ENCODE measurements at regions of chr15 and their contacts with region 1.

Region 1: GRCh38 chr15:64046347-64047153 is at the start of gene DAPK2:
- DNase-seq: peak; percentile 29 to 83 (median 63)
- ATAC-seq: peak; percentile 91
- H3K4me3 ChIP-seq: peak within 1 kb of the TSS; percentile 55
- H3K4me3 Mint-ChIP-seq: peak within 1 kb of the TSS; percentile 74 to 85 (median 82)
- H3K27ac ChIP-seq: no peak within 1 kb of the TSS
- H3K27ac Mint-ChIP-seq: peak within 1 kb of the TSS in 5 of 9 donors; percentile 28 to 88 (median 61)
- H3K4me1 ChIP-seq: peaks cover 0 to 5% of the 10 kb centered on the region in 2 donors
- H3K4me1 Mint-ChIP-seq: peaks cover 5 to 30% (median 10%) of the 10 kb centered on the region in 7 donors
- H3K27me3 ChIP-seq: no peaks in the 10 kb centered on the region
- H3K27me3 Mint-ChIP-seq: peaks cover 4 to 41% (median 13%) of the 10 kb centered on the region in 5 donors
- total RNA-seq, gene DAPK2: 0.46 to 9.3 (median 4.2) TPM in 4 of 5 experiments, not detected in the other

Region 2: DNA sequence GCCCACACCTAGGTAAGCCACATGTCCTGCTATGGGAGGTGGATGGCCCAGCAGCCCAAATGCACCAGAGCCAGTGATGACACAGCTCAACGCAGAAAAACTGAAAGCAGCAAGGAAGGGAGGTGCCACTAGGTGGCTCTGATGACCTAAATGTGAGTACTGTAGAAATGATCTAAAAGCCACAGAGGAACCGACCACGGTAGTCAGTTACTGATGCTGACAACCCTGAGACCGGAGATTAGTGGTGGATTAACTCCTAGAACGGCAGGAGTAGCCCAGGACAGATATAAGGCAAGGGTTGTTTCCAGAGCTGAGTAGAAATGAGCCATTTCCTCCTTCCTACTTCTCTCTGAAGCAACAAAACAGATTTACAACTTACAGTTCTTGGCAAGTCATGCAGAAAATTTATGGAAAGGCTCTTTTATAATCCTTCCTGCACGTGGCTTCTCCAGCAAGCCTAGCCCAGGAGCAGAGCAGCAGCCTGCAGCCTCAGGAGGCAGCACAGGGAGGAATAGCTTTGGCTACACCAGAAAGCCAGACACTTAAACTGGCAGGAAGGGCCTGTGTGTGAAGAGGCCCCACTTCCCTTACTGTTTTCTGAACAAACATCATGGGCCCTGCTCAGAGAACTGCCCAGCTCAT is 436.2 kb before region 1 on chr15:
- CTCF ChIA-PET with region 1: interaction called, 3 read pairs
- POLR2A ChIA-PET with region 1: no interaction called
- intact Hi-C with region 1: loop called in 1 of 2 experiments (anchors 2 kb)
- DNase-seq: peak in 8 of 9 donors; percentile 43 to 71 (median 64)
- ATAC-seq: peak; percentile 94
- H3K4me3 ChIP-seq: no peak overlapping the region
- H3K4me3 Mint-ChIP-seq: peak overlapping the region in 7 of 10 donors; percentile 9 to 68 (median 42)
- H3K27ac ChIP-seq: peak overlapping the region; percentile 69
- H3K27ac Mint-ChIP-seq: peak overlapping the region; percentile 74 to 94 (median 84)
- H3K4me1 ChIP-seq: peaks cover 23 to 25% of the 10 kb centered on the region in 2 donors
- H3K4me1 Mint-ChIP-seq: peaks cover 23 to 51% (median 41%) of the 10 kb centered on the region in 7 donors
- H3K27me3 ChIP-seq: no peaks in the 10 kb centered on the region
- H3K27me3 Mint-ChIP-seq: no peaks in the 10 kb centered on the region

Region 3: DNA sequence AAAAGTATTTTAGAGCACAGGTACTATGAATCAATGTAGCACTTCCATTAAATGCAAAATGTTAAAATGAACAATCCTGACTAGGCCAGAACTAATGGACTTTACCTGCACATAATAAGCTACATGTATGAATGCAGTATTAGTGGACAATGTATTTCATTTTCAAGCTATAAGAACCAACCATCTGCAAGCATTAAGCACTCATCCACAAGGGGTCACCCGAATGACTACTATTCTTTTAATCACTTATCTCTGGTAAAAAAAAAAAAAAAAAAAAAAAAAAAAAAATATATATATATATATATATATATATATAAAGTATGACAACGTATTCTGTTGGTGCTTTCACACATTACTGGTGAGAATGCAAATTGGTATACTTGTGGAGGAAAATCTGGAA is 220.0 kb before region 1 on chr15:
- CTCF ChIA-PET with region 1: no interaction called
- POLR2A ChIA-PET with region 1: no interaction called
- intact Hi-C with region 1: loop called (anchors 1 to 5 kb)
- DNase-seq: peak in 3 of 9 donors; percentile 36 to 44 (median 37)
- ATAC-seq: peak; percentile 26
- H3K4me3 ChIP-seq: no peak overlapping the region
- H3K4me3 Mint-ChIP-seq: peak overlapping the region in 8 of 10 donors; percentile 3 to 53 (median 34)
- H3K27ac ChIP-seq: no peak overlapping the region
- H3K27ac Mint-ChIP-seq: peak overlapping the region in 7 of 9 donors; percentile 36 to 98 (median 58)
- H3K4me1 ChIP-seq: peaks cover 21 to 31% of the 10 kb centered on the region in 2 donors
- H3K4me1 Mint-ChIP-seq: peaks cover 67 to 94% (median 85%) of the 10 kb centered on the region in 7 donors
- H3K27me3 ChIP-seq: no peaks in the 10 kb centered on the region
- H3K27me3 Mint-ChIP-seq: no peaks in the 10 kb centered on the region

Region 4: GRCh38 chr15:63945007-63945788 is 101.4 kb before region 1 on chr15:
- CTCF ChIA-PET with region 1: interaction called, 4 read pairs
- POLR2A ChIA-PET with region 1: no interaction called
- intact Hi-C with region 1: loop called (anchors 1 kb)
- DNase-seq: peak; percentile 21 to 68 (median 48)
- ATAC-seq: peak; percentile 94
- H3K4me3 ChIP-seq: no peak overlapping the region
- H3K4me3 Mint-ChIP-seq: no peak overlapping the region
- H3K27ac ChIP-seq: no peak overlapping the region
- H3K27ac Mint-ChIP-seq: peak overlapping the region in 5 of 9 donors; percentile 5 to 75 (median 15)
- H3K4me1 ChIP-seq: peaks cover 0 to 6% of the 10 kb centered on the region in 2 donors
- H3K4me1 Mint-ChIP-seq: peaks cover 1 to 33% (median 6%) of the 10 kb centered on the region in 7 donors
- H3K27me3 ChIP-seq: no peaks in the 10 kb centered on the region
- H3K27me3 Mint-ChIP-seq: no peaks in the 10 kb centered on the region

Measured in naive thymus-derived CD4-positive, alpha-beta T cell (primary cell).